ENCODE measurements at regions of chr6 and their contacts with region 1.

Region 1: DNA sequence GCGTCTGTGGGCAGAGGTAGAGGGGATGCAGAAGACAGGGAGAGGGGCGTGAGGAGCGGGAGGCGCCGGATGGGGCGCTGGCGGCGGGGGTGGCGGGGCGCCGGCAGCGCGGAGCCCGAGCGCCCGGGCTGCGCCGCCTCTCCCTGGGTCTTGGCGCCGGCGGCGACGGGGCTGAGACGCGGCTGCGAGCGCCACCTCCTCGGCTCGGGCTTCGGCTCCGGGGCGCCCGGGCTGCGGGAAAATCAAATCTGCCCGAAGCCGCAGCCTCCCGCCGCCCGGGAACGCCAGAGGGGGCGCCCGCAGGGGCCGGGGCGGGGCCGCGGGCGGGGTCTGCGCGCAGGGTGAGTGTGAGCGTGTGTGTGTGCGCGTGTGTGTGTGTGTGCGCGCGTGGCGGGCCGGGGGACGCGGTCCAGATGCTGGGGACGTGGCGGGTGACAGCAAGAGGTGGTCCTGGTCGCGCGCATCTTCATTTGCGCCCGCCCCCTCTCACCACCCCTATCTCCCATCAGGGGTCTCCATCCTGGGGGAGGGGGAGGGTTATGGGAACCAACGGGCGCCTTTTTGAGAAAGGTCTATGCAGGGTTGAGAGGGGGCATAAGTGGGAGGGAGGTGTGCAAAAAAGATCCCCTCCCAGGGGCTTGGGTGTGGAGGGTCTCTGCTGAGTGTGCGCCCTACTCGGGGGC is 646 bp upstream of the CPNE5 start:
- DNase-seq: peak; percentile 34 to 76 (median 54)
- H3K4me3 ChIP-seq: peak overlapping the region; percentile 45
- H3K27ac ChIP-seq: peak overlapping the region in 1 of 2 donors; percentile 0
- H3K4me1 ChIP-seq: peaks cover 8% of the 10 kb centered on the region
- H3K27me3 ChIP-seq: no peaks in the 10 kb centered on the region
- CTCF ChIP-seq: peak in 1 of 3 donors; percentile 7
- EP300 ChIP-seq: no peak
- POLR2A ChIP-seq: no peak

Region 2: DNA sequence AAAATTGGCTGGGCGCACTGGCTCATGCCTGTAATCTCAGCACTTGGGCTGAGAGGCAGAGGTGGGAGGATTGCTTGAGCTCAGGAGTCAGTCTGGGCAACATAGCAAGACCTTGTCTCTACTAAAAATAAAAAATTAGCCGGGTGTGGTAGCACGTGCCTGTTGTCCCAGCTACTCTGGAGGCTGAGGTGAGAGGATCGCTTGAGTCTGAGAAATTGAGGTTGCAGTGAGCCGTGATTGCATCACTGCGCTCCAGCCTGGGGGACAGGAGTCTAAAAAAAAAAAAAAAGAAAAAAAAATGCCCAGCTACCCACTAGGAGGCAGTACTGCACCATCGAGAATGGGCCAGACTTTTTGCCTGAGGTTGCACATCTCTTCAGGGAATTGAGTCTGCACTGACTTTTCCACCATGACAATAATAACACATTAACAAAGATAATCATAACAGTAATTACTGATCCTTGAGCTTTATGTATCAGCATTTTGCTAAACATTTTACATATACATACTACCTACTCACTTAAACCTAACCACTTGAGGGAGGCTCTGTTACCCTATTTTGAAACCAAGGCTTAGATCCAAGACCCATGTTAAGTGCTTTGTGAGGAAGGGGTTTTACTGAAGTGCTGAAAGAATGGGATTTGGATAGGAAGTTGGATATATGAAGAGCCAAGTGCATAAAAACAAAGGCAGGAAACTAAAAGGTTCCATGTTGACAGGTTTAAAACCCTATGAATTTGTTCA is 224.7 kb before region 1 on chr6:
- intact Hi-C with region 1: loop called in 2 of 4 experiments (anchors 10 kb)
- DNase-seq: peak in 4 of 5 donors; percentile 20 to 60 (median 39)
- H3K4me3 ChIP-seq: no peak overlapping the region
- H3K27ac ChIP-seq: no peak overlapping the region
- H3K4me1 ChIP-seq: no peaks in the 10 kb centered on the region
- H3K27me3 ChIP-seq: no peaks in the 10 kb centered on the region
- CTCF ChIP-seq: peak; percentile 38 to 63 (median 58)
- EP300 ChIP-seq: no peak
- POLR2A ChIP-seq: no peak

Region 3: GRCh38 chr6:36623547-36624459 is 216.1 kb before region 1 on chr6:
- intact Hi-C with region 1: loop called in 2 of 4 experiments (anchors 10 kb)
- DNase-seq: peak; percentile 91 to 96 (median 94)
- H3K4me3 ChIP-seq: no peak overlapping the region
- H3K27ac ChIP-seq: peak overlapping the region; percentile 76 to 80
- H3K4me1 ChIP-seq: peaks cover 20% of the 10 kb centered on the region
- H3K27me3 ChIP-seq: no peaks in the 10 kb centered on the region
- CTCF ChIP-seq: peak; percentile 39 to 94 (median 87)
- EP300 ChIP-seq: no peak
- POLR2A ChIP-seq: no peak

Region 4: GRCh38 chr6:36788768-36789167 is 51.1 kb before region 1 on chr6:
- intact Hi-C with region 1: no loop called
- DNase-seq: no peak
- H3K4me3 ChIP-seq: no peak overlapping the region
- H3K27ac ChIP-seq: no peak overlapping the region
- H3K4me1 ChIP-seq: peaks cover 4% of the 10 kb centered on the region
- H3K27me3 ChIP-seq: no peaks in the 10 kb centered on the region
- CTCF ChIP-seq: no peak
- EP300 ChIP-seq: no peak
- POLR2A ChIP-seq: no peak

Measured in ovary (tissue), 10 donors.